T-cell (primary cell): ENCODE measurements at regions of chr7 and their contacts with region 1.

Region 1: GRCh38 chr7:156773966-156774365 is 119.0 kb downstream of the LMBR1 start:
- DNase-seq: no peak
- ATAC-seq: no peak
- H3K4me3 ChIP-seq: no peak overlapping the region
- H3K4me3 Mint-ChIP-seq: no peak overlapping the region
- H3K27ac ChIP-seq: no peak overlapping the region
- H3K27ac Mint-ChIP-seq: no peak overlapping the region
- H3K4me1 ChIP-seq: no peaks in the 10 kb centered on the region
- H3K4me1 Mint-ChIP-seq: peaks cover 22 to 36% (median 23%) of the 10 kb centered on the region in 3 donors
- H3K27me3 ChIP-seq: no peaks in the 10 kb centered on the region
- H3K27me3 Mint-ChIP-seq: no peaks in the 10 kb centered on the region

Region 2: DNA sequence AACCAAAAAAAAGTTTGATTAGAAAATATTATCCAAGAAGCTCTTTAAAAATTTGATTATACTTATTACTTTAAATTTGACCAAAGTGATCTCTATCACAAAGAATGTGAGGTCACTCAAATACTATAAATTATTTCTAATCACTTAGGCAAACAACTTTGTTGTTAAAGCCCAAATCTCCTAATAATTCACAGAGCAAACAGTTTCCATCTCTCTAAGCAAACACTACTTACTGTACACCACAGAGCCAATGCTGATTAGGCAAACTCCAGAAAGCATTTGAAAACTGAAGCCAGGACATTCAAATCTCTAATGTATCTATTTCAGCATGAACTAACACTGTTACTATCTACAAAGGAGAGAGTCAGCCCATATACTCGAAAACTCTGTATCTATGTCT is 26.3 kb before region 1 on chr7:
- CTCF ChIA-PET with region 1: no interaction called
- POLR2A ChIA-PET with region 1: interaction called in 1 of 2 experiments, 10 read pairs
- DNase-seq: no peak
- ATAC-seq: no peak
- H3K4me3 ChIP-seq: no peak overlapping the region
- H3K4me3 Mint-ChIP-seq: no peak overlapping the region
- H3K27ac ChIP-seq: no peak overlapping the region
- H3K27ac Mint-ChIP-seq: no peak overlapping the region
- H3K4me1 ChIP-seq: no peaks in the 10 kb centered on the region
- H3K4me1 Mint-ChIP-seq: peaks cover 4 to 7% (median 6%) of the 10 kb centered on the region in 3 donors
- H3K27me3 ChIP-seq: no peaks in the 10 kb centered on the region
- H3K27me3 Mint-ChIP-seq: no peaks in the 10 kb centered on the region